Activated CD4-positive, alpha-beta T cell treated with anti-CD3 and anti-CD28 coated beads, Interleukin-2, amount 10 ng/mL, durations not matched to agents 7 days and 5 days (primary cell): ENCODE measurements at regions of chr20 and their contacts with region 1.

Region 1: DNA sequence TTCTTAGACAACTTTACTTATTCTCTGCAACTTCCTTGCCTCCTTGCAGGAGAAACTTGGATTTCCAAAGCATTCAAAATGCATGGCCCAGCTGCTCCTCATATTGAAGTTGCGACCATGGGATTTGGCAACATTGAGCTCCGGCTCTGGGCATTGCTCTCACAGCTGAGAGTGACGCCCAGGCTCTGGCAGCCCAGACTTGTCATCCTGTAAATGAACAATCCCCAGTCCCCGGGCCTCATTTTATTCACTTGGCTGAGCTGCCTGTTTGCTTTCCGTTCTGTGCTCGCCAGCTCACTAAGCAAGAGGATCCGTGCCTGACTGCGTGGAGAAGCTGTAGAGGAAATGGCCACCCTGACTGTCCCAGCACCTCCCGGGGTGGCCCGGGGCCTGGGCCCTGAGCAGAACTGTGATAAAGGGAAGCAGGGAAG is 119.5 kb upstream of the CD93 start:
- DNase-seq: no peak
- H3K4me3 Mint-ChIP-seq: no peak overlapping the region
- H3K27ac Mint-ChIP-seq: no peak overlapping the region
- H3K4me1 Mint-ChIP-seq: no peaks in the 10 kb centered on the region
- H3K27me3 Mint-ChIP-seq: peaks cover 2% of the 10 kb centered on the region

Region 2: DNA sequence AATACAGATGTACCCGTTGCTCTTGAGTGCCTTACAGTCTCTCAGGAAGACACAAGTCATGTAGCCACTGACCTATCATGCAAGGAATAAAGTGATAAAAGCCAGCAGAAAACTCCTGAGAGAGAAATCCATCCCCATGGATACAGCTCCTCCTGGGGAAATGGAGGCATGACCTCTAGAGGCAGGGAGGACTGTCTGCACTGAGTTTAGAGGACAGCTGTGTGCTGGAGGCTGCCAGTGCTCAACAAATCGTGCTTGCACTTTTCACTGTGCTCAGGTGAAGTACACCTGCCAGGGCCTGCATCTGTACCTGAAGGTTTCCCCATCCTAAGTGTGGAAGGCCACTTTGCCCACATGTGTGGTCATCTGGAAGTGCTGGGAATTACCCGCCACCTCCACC is 131.6 kb before region 1 on chr20:
- CTCF ChIA-PET with region 1: no interaction called
- POLR2A ChIA-PET with region 1: interaction called, 10 read pairs
- DNase-seq: no peak
- H3K4me3 Mint-ChIP-seq: no peak overlapping the region
- H3K27ac Mint-ChIP-seq: no peak overlapping the region
- H3K4me1 Mint-ChIP-seq: no peaks in the 10 kb centered on the region
- H3K27me3 Mint-ChIP-seq: peaks cover 2% of the 10 kb centered on the region

Region 3: DNA sequence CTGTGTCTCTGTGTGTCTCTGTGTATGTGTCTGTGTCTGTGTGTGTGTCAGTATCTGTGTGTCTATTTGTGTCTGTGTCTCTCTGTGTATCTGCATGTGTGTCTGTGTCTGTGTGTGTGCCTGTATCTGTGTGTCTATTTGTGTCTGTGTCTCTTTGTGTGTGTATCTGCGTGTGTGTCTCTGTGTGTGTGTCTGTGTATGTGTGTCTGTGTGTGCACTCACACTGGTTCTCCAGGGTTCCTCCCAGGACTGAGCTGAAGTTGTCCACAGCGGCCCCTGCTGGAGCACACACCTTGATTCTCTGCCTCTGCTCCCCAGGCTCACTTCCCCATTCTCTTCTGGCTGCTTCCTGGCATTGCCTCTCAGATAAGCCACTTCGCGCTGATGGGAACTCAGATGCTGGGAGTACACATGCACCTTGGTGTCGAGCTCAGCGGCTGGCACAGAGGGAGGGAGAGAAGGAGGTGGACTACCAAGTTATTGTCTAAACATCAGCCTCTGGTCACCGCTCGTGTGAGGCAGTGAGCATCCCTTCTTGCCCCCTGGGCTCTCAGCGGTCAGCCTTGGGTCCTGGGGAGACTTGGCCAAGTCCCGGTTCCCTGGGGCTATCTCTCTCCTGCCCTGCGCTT is 40.0 kb after region 1 on chr20:
- CTCF ChIA-PET with region 1: no interaction called
- POLR2A ChIA-PET with region 1: no interaction called
- DNase-seq: peak; percentile 34
- H3K4me3 Mint-ChIP-seq: no peak overlapping the region
- H3K27ac Mint-ChIP-seq: no peak overlapping the region
- H3K4me1 Mint-ChIP-seq: no peaks in the 10 kb centered on the region
- H3K27me3 Mint-ChIP-seq: peaks cover 2% of the 10 kb centered on the region

Region 4: DNA sequence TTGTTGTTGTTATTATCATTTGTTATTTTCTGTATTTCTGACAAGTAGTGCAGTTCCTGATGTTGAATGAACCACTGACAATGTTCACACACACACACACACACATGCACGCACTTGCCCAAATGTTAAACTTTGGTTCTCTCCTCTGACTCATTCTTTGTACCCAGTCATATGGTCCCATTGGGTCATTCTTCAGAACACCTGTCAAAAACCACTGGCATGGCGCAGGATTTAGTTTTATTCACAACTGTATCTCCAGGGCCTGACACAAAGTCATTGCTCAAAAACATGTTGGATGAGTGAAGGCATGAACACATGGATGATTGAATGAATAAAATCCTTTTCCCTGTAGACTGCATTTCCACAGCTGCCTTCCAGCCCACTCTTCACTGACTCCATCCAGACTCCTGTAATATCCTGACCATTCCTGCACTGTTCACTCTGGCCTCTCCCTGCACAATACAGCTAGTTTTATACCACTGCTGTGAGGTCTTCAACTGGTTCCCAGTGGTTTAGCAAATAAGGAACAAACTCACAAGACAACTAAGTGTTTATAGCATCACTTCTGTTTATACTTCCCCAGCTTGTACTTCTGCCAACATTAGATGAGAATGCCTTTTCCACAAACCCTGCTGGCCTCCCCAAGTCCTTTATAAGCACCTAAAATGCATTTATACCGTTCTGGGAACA is 254.0 kb after region 1 on chr20:
- CTCF ChIA-PET with region 1: no interaction called
- POLR2A ChIA-PET with region 1: no interaction called
- DNase-seq: no peak
- H3K4me3 Mint-ChIP-seq: no peak overlapping the region
- H3K27ac Mint-ChIP-seq: no peak overlapping the region
- H3K4me1 Mint-ChIP-seq: peaks cover 17% of the 10 kb centered on the region
- H3K27me3 Mint-ChIP-seq: peaks cover 12% of the 10 kb centered on the region